ENCODE measurements at regions of chr13 and their contacts with region 1.

Region 1: GRCh38 chr13:40026174-40026585 is 370.7 kb downstream of the COG6 start:
- DNase-seq: peak; percentile 64
- H3K4me3 Mint-ChIP-seq: no peak overlapping the region
- H3K27ac Mint-ChIP-seq: peak overlapping the region; percentile 55
- H3K4me1 Mint-ChIP-seq: peaks cover 42% of the 10 kb centered on the region
- H3K27me3 Mint-ChIP-seq: no peaks in the 10 kb centered on the region

Region 2: DNA sequence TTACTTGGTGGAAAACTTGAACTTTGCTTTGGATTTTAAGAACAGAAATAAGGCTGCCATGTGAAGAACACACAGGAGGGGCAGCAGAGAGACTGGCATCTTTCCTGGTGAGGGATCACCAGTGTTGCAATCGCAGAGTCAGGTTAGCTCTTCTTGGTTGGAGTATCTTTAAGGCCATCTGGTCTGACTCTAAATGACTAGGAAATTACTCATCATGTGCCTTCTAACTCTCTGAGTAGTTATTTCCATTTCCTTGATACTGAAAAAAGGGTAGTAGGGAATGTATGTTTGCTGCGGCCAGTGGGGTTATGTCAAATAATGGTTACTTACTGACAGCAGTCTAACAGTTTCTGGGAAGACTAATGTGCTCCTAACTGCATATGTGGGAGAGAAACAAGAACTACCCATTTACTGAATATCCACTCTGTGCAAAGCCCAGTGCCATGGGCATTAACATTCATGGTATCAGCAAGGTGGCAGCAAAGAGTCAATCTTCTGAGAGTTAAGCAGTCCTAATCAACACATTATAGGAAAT is 248.6 kb before region 1 on chr13:
- intact Hi-C with region 1: loop called (anchors 1 kb)
- DNase-seq: no peak
- H3K4me3 Mint-ChIP-seq: no peak overlapping the region
- H3K27ac Mint-ChIP-seq: peak overlapping the region; percentile 86
- H3K4me1 Mint-ChIP-seq: peaks cover 50% of the 10 kb centered on the region
- H3K27me3 Mint-ChIP-seq: no peaks in the 10 kb centered on the region

Region 3: GRCh38 chr13:39942552-39943273 is 83.5 kb before region 1 on chr13:
- intact Hi-C with region 1: loop called (anchors 2 kb)
- DNase-seq: peak; percentile 38
- H3K4me3 Mint-ChIP-seq: no peak overlapping the region
- H3K27ac Mint-ChIP-seq: no peak overlapping the region
- H3K4me1 Mint-ChIP-seq: peaks cover 17% of the 10 kb centered on the region
- H3K27me3 Mint-ChIP-seq: peaks cover 1% of the 10 kb centered on the region

Region 4: DNA sequence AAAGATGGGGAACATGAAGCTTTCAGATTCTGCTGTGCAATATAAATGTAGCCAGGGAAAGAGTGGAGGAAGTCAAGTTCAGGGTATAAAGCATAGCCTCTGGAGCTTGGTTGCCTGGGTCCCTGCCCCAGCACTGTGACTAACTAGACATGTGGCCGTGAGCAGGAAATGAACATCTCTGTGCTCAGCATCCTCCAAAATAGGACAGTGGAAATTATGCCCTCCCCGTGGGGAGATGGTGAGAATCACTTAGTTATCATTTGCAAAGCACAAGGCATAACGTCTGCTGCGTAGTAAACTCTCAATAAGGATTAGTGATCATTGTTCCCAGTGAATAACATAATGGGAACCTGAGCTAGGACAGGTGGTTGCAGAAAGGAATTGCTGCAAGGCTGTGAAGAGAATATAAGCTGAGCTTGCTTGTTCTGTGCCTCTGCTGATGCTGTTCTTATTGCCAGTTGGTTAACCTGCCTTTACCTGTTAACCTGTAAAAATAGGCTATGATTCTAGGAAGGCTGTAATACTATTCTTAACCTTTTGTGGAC is 70.2 kb after region 1 on chr13:
- intact Hi-C with region 1: no loop called
- DNase-seq: no peak
- H3K4me3 Mint-ChIP-seq: no peak overlapping the region
- H3K27ac Mint-ChIP-seq: no peak overlapping the region
- H3K4me1 Mint-ChIP-seq: peaks cover 18% of the 10 kb centered on the region
- H3K27me3 Mint-ChIP-seq: no peaks in the 10 kb centered on the region

Region 5: DNA sequence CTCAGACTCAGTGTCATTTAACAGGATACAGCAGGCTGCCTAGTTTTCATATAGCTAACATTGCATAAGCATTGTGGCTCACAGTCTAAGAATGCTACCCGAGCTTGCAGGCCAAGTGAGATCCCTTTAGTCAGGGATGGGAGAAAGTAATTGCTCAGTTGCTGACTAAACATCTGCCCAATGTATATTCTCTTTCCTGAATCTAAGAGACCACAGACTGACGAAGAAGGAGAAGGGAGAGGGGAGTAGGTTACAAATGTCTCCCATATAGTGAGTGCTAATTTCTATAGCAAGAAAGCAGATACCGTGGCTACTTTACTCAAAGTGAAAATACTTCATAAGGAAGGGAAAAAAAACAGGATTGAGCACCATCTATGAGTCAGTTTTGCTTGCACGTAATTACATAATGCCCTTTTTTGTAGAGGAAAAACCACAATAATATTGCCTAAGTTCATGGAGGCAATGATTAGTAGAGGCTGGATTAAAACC is 83.2 kb after region 1 on chr13:
- intact Hi-C with region 1: loop called (anchors 1 kb)
- DNase-seq: no peak
- H3K4me3 Mint-ChIP-seq: no peak overlapping the region
- H3K27ac Mint-ChIP-seq: peak overlapping the region; percentile 13
- H3K4me1 Mint-ChIP-seq: peaks cover 25% of the 10 kb centered on the region
- H3K27me3 Mint-ChIP-seq: peaks cover 4% of the 10 kb centered on the region

Region 6: DNA sequence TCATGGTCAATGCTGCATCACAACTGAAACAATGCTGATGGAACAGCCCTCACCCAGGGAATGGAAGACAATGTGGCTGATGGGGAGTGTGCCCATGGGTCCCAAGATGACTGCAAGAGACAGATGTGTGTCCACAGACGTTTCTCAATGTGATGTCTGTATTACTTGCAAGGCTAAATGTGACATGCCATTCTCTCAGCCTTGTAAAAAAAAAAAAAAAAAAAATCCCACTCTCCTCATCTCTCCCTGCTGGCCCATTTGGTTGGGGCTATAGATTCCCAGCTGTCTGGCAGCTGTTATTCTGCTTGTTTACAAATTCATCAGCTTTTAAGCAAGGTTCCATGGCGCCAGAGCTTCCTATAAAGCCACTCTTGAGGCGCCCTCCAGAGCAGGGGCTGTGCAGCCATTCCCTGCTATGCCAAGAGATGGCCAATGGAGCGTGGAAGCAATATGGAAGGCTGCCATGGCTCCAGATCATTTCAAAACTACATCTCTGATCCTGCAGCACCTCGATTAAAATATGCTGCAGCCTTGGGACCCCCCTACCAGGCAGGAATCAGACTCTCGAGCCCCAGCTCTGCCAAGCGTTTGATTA is 345.4 kb after region 1 on chr13:
- intact Hi-C with region 1: loop called (anchors 5 kb)
- DNase-seq: no peak
- H3K4me3 Mint-ChIP-seq: no peak overlapping the region
- H3K27ac Mint-ChIP-seq: no peak overlapping the region
- H3K4me1 Mint-ChIP-seq: peaks cover 34% of the 10 kb centered on the region
- H3K27me3 Mint-ChIP-seq: no peaks in the 10 kb centered on the region

Region 7: GRCh38 chr13:40777166-40777808 is 751.1 kb after region 1 on chr13:
- intact Hi-C with region 1: loop called (anchors 2 kb)
- DNase-seq: peak; percentile 36
- H3K4me3 Mint-ChIP-seq: peak overlapping the region; percentile 72
- H3K27ac Mint-ChIP-seq: peak overlapping the region; percentile 99
- H3K4me1 Mint-ChIP-seq: peaks cover 35% of the 10 kb centered on the region
- H3K27me3 Mint-ChIP-seq: no peaks in the 10 kb centered on the region

Measured in activated T-helper 2 cell treated with anti-CD3 and anti-CD28 coated beads, Interferon-gamma antibody, Interleukin-2, Interleukin-4, amounts not matched to agents 10 μg/mL and 5 μg/mL and 100 μg/mL, durations not matched to agents 14 hours and 24 hours and 36 hours (primary cell).